WTC11 (cell line): ENCODE measurements at regions of chr7 and their contacts with region 1.

Region 1: GRCh38 chr7:87416682-87417587 is 58.5 kb downstream of the ABCB4 start:
- DNase-seq: peak; percentile 62
- ATAC-seq: peak; percentile 70
- H3K4me3 Mint-ChIP-seq: no peak overlapping the region
- H3K27ac Mint-ChIP-seq: no peak overlapping the region
- H3K4me1 Mint-ChIP-seq: peaks cover 7% of the 10 kb centered on the region
- H3K27me3 Mint-ChIP-seq: no peaks in the 10 kb centered on the region
- CTCF ChIP-seq: peak; percentile 47

Region 2: DNA sequence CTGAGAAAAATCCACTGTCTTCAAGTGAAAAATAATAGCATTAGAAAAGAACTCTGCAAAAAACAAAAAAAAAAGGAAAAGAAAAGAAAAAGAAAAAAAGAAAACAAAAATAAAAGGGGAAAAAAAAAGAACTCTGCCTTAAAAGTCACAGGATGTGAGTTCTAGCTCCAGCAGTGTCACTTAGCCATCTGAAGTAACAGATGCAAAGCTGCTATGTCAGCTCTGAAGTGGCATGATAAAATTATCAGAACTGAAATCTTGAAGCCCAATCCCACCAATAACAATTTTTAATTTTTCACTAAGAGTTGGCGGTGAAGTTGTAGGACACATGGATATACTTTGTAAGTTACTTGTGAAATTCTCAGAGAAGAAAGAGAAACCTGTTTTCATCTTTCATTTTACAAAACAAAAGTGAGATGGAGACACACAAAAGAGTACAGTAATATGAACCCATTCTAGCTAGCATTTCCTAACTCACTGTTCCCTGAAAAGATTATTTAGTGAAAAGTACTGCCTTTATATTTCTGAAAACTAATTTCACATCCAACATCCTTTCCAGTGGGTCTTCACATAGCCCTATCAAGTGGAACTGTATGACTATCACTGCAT is 460.9 kb before region 1 on chr7:
- CTCF ChIA-PET with region 1: no interaction called
- POLR2A ChIA-PET with region 1: no interaction called
- DNase-seq: no peak
- ATAC-seq: no peak
- H3K4me3 Mint-ChIP-seq: no peak overlapping the region
- H3K27ac Mint-ChIP-seq: no peak overlapping the region; the same call in 1 of the 2 replicates
- H3K4me1 Mint-ChIP-seq: peaks cover 17% of the 10 kb centered on the region
- H3K27me3 Mint-ChIP-seq: no peaks in the 10 kb centered on the region
- CTCF ChIP-seq: no peak

Region 3: GRCh38 chr7:87312215-87312865 is 104.6 kb before region 1 on chr7:
- CTCF ChIA-PET with region 1: interaction called, 11 read pairs
- POLR2A ChIA-PET with region 1: no interaction called
- DNase-seq: peak; percentile 60
- ATAC-seq: peak; percentile 93
- H3K4me3 Mint-ChIP-seq: no peak overlapping the region
- H3K27ac Mint-ChIP-seq: no peak overlapping the region
- H3K4me1 Mint-ChIP-seq: 0 out of 2 replicates have a peak, but pooled peaks cover 3% of the 10 kb centered on the region
- H3K27me3 Mint-ChIP-seq: no peaks in the 10 kb centered on the region
- CTCF ChIP-seq: peak; percentile 95